Astrocyte of the cerebellum (primary cell): ENCODE measurements at regions of chr1 and their contacts with region 1.

Region 1: DNA sequence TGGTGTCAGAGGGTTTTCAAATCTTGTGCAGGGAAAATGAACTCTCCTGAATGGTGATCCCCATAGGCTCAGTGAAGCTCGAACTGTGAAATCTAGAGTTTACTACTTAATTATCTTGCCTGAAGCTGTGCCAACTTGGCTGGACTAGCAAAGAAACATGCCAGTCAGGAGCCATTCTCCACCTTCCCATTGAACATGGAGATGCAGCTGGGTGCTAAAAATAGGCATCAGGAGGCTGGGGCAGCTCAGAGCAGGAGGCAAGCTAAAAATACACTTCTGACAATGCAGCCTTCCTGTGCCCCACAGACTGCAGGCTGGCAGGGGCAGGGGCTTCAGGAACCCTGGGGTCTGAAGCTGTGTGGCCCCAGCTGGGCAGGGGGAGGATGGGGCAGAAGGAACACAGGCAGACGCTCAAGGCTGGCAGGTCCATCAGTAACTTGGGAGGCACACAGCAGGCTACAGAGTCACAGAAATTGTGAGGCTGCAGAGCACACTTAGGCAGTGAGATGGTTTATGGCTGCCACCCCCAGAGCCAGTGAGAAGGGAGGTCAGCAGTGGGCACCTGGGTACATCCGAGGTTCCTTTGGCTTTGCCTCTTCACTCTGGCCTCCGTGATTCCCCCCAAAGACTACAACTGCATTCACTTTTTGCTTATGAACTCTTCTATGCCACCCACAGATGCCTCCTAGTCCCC is 155.4 kb upstream of the KCND3 start:
- DNase-seq: no peak
- H3K4me3 ChIP-seq: no peak overlapping the region
- CTCF ChIP-seq: no peak

Region 2: DNA sequence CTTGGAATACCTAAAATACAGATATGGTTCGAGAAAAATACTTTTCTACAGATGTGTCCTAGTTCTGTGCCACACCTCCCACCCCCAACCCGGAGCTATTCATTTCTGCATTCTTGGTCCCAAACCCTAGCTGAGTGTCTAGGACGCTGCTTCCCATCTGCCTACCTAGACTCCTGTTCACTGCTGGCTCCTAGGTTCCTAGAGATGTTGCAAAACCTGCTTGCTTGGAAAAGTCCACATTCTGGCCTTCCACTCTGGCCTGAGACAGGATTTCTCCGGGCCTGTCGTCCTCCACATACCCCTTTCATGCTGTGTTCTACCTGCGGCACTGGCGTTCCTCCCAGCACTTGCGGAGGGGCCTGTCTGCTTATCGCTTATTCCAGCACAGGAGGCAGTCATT is 85.4 kb after region 1 on chr1:
- in situ Hi-C with region 1: loop called (anchors 5 kb)
- DNase-seq: no peak
- H3K4me3 ChIP-seq: no peak overlapping the region
- CTCF ChIP-seq: no peak